Thyroid gland (tissue), 4 donors: ENCODE measurements at regions of chr11 and their contacts with region 1.

Region 1: GRCh38 chr11:1916986-1917670 is 2.4 kb upstream of the TNNT3 start:
- DNase-seq: no peak
- H3K4me3 ChIP-seq: no peak overlapping the region
- H3K27ac ChIP-seq: no peak overlapping the region
- H3K4me1 ChIP-seq: no peaks in the 10 kb centered on the region
- H3K27me3 ChIP-seq: no peaks in the 10 kb centered on the region
- CTCF ChIP-seq: no peak
- POLR2A ChIP-seq: no peak

Region 2: DNA sequence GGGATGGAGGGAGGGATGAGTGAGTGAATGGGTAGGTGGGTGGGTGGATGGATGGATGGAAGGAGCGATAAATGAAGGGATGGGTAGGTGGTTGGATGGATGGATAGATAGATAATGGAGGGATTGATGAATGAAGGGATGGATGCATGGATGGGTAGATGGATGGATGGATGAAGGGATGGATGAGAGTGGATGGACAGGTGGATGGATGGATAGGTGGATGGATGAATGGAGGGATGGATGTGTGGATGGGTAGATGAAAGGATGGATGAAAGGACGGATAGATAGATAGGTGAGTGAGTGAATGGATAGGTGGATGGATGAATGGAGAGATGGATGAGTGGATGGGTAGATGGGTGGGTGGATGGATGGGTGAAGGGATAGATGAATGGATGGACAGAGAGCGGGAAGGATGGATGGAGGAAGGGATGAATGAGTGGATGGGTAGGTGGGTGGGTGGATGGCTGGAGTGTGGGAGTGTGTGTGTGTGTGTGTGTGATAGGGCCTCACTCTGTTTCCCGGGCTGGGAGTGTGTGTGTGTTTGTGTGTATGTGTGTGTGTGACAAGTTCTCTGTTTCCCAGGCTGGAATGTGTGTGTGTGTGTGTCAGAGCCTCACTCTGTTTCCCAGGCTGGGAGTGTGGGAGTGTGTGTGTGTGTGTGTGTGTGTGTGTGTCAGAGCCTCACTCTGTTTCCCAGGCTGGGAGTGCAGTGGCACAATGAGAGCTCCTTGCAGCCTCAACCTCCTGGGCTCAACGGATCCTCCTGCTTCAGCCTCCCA is 23.4 kb before region 1 on chr11:
- intact Hi-C with region 1: loop called (anchors 1 kb)
- DNase-seq: no peak
- H3K4me3 ChIP-seq: no peak overlapping the region
- H3K27ac ChIP-seq: no peak overlapping the region
- H3K4me1 ChIP-seq: no peaks in the 10 kb centered on the region
- H3K27me3 ChIP-seq: no peaks in the 10 kb centered on the region
- CTCF ChIP-seq: no peak
- POLR2A ChIP-seq: no peak

Region 3: GRCh38 chr11:1935156-1936071 is 18.3 kb after region 1 on chr11:
- intact Hi-C with region 1: loop called (anchors 2 kb)
- DNase-seq: no peak
- H3K4me3 ChIP-seq: no peak overlapping the region
- H3K27ac ChIP-seq: no peak overlapping the region
- H3K4me1 ChIP-seq: no peaks in the 10 kb centered on the region
- H3K27me3 ChIP-seq: no peaks in the 10 kb centered on the region
- CTCF ChIP-seq: no peak
- POLR2A ChIP-seq: no peak

Region 4: GRCh38 chr11:1968454-1969002 is 51.4 kb after region 1 on chr11:
- intact Hi-C with region 1: no loop called
- DNase-seq: no peak
- H3K4me3 ChIP-seq: no peak overlapping the region
- H3K27ac ChIP-seq: no peak overlapping the region
- H3K4me1 ChIP-seq: no peaks in the 10 kb centered on the region
- H3K27me3 ChIP-seq: no peaks in the 10 kb centered on the region
- CTCF ChIP-seq: no peak
- POLR2A ChIP-seq: no peak